ENCODE measurements at regions of chr7 and their contacts with region 1.

Region 1: DNA sequence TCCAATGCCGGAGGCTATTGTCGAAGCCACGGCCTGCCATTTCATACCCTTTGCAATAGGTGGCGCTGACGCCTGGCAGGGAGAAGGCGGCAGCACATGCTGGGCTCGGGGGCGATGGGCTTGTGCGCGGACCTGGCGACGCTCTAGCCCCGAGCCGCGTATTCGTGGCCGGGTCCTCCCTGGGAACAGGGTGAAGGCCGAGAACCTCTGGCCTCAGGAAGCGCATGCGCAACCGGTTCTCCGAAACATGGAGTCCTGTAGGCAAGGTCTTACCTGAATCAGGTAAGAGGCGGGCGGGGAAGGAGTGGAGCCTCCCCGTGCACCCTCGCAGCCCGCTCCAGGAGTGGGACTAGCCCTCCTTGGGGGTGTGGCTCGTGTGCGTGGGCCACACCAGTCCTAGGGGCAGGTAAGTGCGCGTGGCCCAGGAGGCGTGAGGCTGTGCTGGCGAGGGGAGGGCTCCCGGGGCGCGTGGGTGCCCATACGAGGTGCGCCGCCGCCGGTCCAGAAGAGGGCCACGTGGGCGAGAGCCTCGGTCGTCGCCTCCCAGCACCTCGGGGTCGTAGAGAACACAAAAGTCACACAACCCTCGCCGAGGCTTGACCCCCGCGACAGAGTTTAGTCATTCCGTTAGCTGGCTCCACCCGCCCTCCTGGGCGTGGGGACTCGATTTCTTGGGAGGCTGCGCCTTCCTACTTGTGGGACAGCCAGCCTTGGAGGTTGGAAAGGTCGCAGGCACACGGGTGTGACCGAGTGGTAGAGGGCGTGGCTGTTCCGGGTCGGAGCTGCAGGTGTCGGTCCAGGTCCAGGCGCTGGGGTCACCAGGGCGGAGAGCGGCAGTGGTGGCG is 5.5 kb upstream of the MEST start:
- DNase-seq: peak; percentile 21 to 79 (median 67)
- ATAC-seq: peak; percentile 83
- H3K4me3 ChIP-seq: peak overlapping the region; percentile 63 to 86
- H3K4me3 Mint-ChIP-seq: peak overlapping the region; percentile 93
- H3K27ac ChIP-seq: peak overlapping the region in 1 of 2 experiments; percentile 31
- H3K27ac Mint-ChIP-seq: peak overlapping the region; percentile 86
- H3K4me1 ChIP-seq: peaks cover 10% of the 10 kb centered on the region
- H3K4me1 Mint-ChIP-seq: peaks cover 33% of the 10 kb centered on the region
- H3K27me3 ChIP-seq: peaks cover 0 to 3% of the 10 kb centered on the region in 2 experiments
- H3K27me3 Mint-ChIP-seq: peaks cover 20% of the 10 kb centered on the region
- CTCF ChIP-seq: peak; percentile 95

Region 2: DNA sequence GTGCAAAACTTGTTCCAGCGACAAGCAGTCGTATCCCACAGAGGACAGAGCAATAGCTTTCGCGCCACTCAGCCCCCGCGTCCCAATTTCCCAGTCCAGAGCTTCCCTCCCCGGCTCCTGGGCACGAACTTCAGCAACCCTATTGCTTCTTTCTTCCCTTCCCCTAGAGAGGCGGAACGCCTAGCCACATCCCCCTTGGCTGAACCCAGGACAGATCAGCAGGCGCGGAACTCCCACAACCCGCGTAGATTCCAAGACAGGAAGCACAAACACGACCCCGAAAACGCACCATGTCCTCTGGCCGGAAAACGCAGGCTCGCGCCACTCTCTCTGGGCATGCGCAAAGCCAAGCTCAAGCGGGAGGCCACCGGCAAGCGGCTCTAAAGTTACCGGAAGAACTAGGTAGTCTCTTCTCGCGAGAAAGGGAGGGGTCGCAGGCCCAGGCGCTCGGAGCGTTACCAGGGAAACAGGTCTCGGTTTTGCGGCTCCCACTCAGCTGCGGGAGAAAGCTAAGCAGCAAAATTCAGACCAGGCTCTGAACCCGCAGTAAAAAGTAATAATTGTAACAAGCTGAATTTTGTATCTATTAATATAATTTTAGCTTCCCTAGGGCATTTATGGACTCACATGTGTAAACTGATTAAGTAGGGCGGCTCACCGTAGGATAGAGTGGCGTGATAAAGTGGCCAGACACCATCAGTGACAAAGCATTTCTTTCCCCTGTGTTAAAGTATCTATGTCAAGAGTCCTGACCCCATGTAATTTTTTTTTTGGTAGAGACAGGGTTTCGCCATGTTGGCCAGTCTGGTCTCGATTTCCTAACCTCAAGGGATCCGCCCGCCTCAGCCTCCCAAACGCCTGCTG is 281.0 kb before region 1 on chr7 and contains the start of gene TMEM209:
- CTCF ChIA-PET with region 1: no interaction called
- POLR2A ChIA-PET with region 1: interaction called, 3 read pairs
- intact Hi-C with region 1: loop called in 1 of 2 experiments (anchors 5 kb)
- DNase-seq: peak; percentile 85 to 97 (median 93)
- ATAC-seq: peak; percentile 96
- H3K4me3 ChIP-seq: peak within 1 kb of the TSS; percentile 95 to 99
- H3K4me3 Mint-ChIP-seq: peak within 1 kb of the TSS; percentile 100
- H3K27ac ChIP-seq: peak within 1 kb of the TSS; percentile 80 to 92
- H3K27ac Mint-ChIP-seq: peak within 1 kb of the TSS; percentile 100
- H3K4me1 ChIP-seq: peaks cover 5% of the 10 kb centered on the region
- H3K4me1 Mint-ChIP-seq: peaks cover 34% of the 10 kb centered on the region
- H3K27me3 ChIP-seq: no peaks in the 10 kb centered on the region
- H3K27me3 Mint-ChIP-seq: no peaks in the 10 kb centered on the region
- CTCF ChIP-seq: no peak
- total RNA-seq, gene TMEM209: 15.7 to 15.9 TPM

Region 3: DNA sequence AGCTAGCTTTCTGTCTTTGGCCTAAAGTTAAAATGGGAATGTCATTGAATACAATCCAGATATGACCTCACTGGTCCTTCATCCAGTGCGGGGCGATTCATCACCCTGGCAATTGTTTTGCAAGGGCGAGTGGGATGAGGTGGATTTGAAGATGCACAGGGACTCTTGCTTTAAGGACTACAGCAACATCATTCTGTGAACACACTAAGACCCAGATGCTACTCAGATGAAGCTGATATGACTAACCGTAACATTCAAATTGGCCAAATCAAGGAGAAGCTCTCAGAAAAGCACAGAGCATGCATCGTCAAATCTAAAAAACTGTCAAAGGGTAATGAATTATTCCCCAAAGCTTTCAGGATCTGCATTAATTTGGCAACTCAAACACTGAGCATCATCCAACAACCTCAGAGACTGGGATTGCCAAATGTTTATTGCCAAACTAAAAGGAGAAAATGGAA is 93.2 kb before region 1 on chr7:
- CTCF ChIA-PET with region 1: interaction called, 3 read pairs
- POLR2A ChIA-PET with region 1: interaction called, 3 read pairs
- intact Hi-C with region 1: loop called (anchors 1 to 5 kb)
- DNase-seq: no peak
- ATAC-seq: no peak
- H3K4me3 ChIP-seq: no peak overlapping the region
- H3K4me3 Mint-ChIP-seq: no peak overlapping the region
- H3K27ac ChIP-seq: no peak overlapping the region
- H3K27ac Mint-ChIP-seq: peak overlapping the region; percentile 55
- H3K4me1 ChIP-seq: peaks cover 25% of the 10 kb centered on the region
- H3K4me1 Mint-ChIP-seq: peaks cover 33% of the 10 kb centered on the region
- H3K27me3 ChIP-seq: no peaks in the 10 kb centered on the region
- H3K27me3 Mint-ChIP-seq: no peaks in the 10 kb centered on the region
- CTCF ChIP-seq: no peak

Region 4: DNA sequence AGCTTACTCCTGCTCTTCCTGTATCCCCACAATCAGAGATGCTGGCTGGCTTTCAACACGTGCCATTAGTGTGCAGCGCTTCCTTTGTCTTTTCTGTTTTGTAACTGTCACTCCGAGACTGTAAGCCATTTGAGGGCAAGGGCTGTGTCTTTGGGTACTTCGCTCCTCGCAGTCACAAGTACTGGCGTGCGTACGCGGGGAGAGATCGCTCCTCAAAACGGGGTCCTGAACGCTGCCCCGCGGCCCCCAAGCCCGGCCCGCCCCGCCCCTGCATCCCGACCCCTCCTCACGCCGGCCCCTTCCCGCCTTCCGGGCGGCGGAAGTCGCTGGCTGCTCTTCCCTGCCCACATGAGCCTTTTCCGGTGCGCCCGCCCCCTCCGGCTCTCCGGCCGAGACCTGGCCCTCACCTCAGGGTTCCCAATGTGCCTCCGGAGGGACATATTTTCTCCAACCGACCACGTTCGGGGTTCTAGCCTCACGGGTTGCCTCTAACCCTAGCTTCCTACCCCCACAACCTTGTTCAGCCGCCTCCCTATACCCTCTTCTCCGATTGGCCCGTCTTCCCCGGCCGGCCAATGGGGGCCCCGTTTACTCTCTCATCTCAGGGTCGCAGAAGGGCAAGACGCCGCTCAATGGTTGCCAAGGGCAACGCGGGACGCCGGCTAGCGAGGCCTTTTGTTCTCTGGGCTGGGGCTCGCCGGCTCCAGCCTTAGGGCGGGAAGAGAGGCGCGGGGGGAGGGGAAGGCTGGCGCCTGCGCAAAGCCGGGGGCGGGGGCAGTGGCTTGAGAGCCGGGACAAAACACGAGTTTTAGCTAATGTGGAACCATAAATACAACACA is 45.6 kb before region 1 on chr7 and contains the start of gene CEP41:
- CTCF ChIA-PET with region 1: no interaction called
- POLR2A ChIA-PET with region 1: interaction called, 4 read pairs
- intact Hi-C with region 1: loop called in 1 of 2 experiments (anchors 2 kb)
- DNase-seq: peak; percentile 82 to 94 (median 89)
- ATAC-seq: peak; percentile 96
- H3K4me3 ChIP-seq: peak within 1 kb of the TSS; percentile 81 to 99
- H3K4me3 Mint-ChIP-seq: peak within 1 kb of the TSS; percentile 99
- H3K27ac ChIP-seq: peak within 1 kb of the TSS; percentile 57 to 75
- H3K27ac Mint-ChIP-seq: peak within 1 kb of the TSS; percentile 97
- H3K4me1 ChIP-seq: peaks cover 31% of the 10 kb centered on the region
- H3K4me1 Mint-ChIP-seq: peaks cover 51% of the 10 kb centered on the region
- H3K27me3 ChIP-seq: no peaks in the 10 kb centered on the region
- H3K27me3 Mint-ChIP-seq: no peaks in the 10 kb centered on the region
- CTCF ChIP-seq: no peak
- total RNA-seq, gene CEP41: 4.8 to 5.5 TPM

Region 5: DNA sequence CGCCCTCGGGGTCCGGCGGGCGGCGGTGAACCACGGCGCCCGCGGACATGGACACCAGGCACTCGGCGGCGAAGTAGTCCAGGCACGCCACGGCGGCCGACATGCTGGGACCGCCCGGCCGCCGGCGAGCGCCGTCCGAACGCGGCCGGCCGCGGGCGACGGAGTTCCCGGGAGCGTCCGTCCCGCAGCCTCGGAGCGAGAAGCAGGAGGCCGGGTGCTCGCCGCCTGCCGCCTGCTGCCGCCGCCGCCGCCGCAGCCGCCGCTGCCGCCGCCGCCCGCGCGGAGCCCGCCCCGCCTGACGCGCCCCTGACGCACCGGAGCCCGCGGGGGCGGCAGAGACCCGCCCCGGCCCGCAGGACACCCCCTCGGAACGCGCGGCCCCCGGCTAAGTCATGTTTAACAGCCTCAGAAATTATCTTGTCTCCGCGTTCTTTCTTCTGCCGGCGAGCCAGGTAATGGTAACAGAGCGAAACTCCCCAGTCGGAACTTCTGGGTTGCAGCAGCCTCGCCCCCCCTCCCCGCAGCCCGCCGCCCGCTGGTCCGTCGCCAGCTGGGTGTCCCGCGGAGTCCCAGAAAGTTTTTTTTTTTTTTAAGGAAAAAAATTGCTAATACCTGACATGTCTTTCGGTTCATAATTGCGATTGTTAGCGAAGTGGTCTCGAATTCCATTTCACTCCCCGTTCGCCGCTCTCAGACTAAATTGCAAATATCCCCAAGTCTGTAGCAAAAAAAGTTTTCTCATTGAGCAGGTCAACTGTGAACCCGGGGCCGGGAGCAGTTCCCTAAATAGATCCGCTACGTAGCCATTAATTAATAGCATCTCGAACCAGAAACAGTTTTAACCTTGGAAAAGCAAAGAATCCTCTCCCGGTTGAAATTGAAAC is 247.8 kb after region 1 on chr7 and contains the start of gene KLF14:
- CTCF ChIA-PET with region 1: no interaction called
- POLR2A ChIA-PET with region 1: no interaction called
- intact Hi-C with region 1: loop called in 1 of 2 experiments (anchors 10 kb)
- DNase-seq: peak in 6 of 9 experiments; percentile 18 to 61 (median 42)
- ATAC-seq: peak; percentile 73
- H3K4me3 ChIP-seq: peak within 1 kb of the TSS; percentile 42 to 48
- H3K4me3 Mint-ChIP-seq: peak within 1 kb of the TSS; percentile 84
- H3K27ac ChIP-seq: no peak within 1 kb of the TSS
- H3K27ac Mint-ChIP-seq: no peak within 1 kb of the TSS
- H3K4me1 ChIP-seq: peaks cover 6% of the 10 kb centered on the region
- H3K4me1 Mint-ChIP-seq: peaks cover 10% of the 10 kb centered on the region
- H3K27me3 ChIP-seq: peaks cover 38 to 42% of the 10 kb centered on the region in 2 experiments
- H3K27me3 Mint-ChIP-seq: peaks cover 80% of the 10 kb centered on the region
- CTCF ChIP-seq: no peak
- total RNA-seq, gene KLF14: not detected

Region 6: GRCh38 chr7:130758429-130759056 is 272.2 kb after region 1 on chr7:
- CTCF ChIA-PET with region 1: no interaction called
- POLR2A ChIA-PET with region 1: no interaction called
- intact Hi-C with region 1: loop called (anchors 1 to 5 kb)
- DNase-seq: peak in 2 of 9 experiments; percentile 57 to 71
- ATAC-seq: peak; percentile 56
- H3K4me3 ChIP-seq: no peak overlapping the region
- H3K4me3 Mint-ChIP-seq: no peak overlapping the region
- H3K27ac ChIP-seq: no peak overlapping the region
- H3K27ac Mint-ChIP-seq: no peak overlapping the region
- H3K4me1 ChIP-seq: no peaks in the 10 kb centered on the region
- H3K4me1 Mint-ChIP-seq: no peaks in the 10 kb centered on the region
- H3K27me3 ChIP-seq: no peaks in the 10 kb centered on the region
- H3K27me3 Mint-ChIP-seq: peaks cover 6% of the 10 kb centered on the region
- CTCF ChIP-seq: peak; percentile 84